ENCODE measurements at regions of chr21 and their contacts with region 1.

Region 1: GRCh38 chr21:28943631-28944030 is 49.0 kb downstream of the LTN1 start:
- DNase-seq: no peak
- H3K4me3 ChIP-seq: no peak overlapping the region
- H3K27ac ChIP-seq: no peak overlapping the region
- H3K4me1 ChIP-seq: no peaks in the 10 kb centered on the region
- H3K27me3 ChIP-seq: no peaks in the 10 kb centered on the region
- CTCF ChIP-seq: no peak
- POLR2A ChIP-seq: no peak

Region 2: DNA sequence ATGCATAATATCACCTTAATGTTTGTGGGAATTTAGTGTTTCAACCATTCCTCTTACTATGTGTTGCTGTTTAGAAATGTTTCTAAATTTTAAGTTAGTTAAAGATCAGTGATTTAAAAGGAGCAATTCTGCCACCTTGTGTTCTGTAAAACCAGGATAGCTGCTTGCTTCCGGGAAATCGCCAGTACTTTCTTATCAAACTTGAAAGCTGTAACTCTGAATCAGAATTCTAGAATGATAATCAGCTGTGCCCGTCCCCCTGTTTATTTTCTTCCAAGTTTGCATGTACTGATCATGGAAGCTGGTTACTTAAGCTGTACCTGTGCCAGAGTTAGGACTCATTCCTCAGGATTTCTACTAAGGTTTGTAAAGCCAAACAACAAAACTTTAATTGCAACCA is 607.3 kb before region 1 on chr21:
- intact Hi-C with region 1: loop called (anchors 10 kb)
- DNase-seq: peak; percentile 10
- H3K4me3 ChIP-seq: no peak overlapping the region
- H3K27ac ChIP-seq: no peak overlapping the region
- H3K4me1 ChIP-seq: no peaks in the 10 kb centered on the region
- H3K27me3 ChIP-seq: no peaks in the 10 kb centered on the region
- CTCF ChIP-seq: peak in 2 of 4 experiments; percentile 55 to 58
- POLR2A ChIP-seq: no peak

Region 3: GRCh38 chr21:28516991-28517592 is 426.5 kb before region 1 on chr21:
- intact Hi-C with region 1: loop called (anchors 10 kb)
- DNase-seq: peak; percentile 44
- H3K4me3 ChIP-seq: no peak overlapping the region
- H3K27ac ChIP-seq: no peak overlapping the region
- H3K4me1 ChIP-seq: no peaks in the 10 kb centered on the region
- H3K27me3 ChIP-seq: no peaks in the 10 kb centered on the region
- CTCF ChIP-seq: peak; percentile 25 to 57 (median 53)
- POLR2A ChIP-seq: no peak

Measured in prostate gland (tissue), 2 donors.